ENCODE measurements at regions of chr13 and their contacts with region 1.

Region 1: DNA sequence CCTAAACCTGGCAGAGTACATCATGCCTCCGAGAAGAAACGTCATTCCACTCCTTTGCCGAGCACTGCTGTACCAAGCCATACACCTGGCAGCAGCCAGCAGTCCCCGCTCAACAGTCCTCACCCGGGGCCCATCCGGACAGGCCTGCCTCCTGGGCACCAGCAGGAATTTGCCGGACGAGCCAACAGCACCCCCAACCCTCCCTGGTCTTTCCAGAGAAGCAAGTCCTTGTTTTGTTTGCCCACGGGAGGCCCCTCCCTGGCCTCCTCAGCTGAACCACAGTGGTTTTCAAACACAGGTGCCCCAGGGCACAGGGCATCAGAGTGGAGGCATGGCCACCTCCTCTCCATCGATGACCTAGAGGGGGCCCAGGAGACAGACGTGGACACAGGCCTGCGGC is 58.3 kb downstream of the FAM124A start:
- DNase-seq: no peak
- ATAC-seq: peak in 4 of 8 donors; percentile 25 to 56 (median 40)
- H3K4me3 ChIP-seq: no peak overlapping the region
- H3K27ac ChIP-seq: no peak overlapping the region
- H3K4me1 ChIP-seq: peaks cover 2 to 46% (median 26%) of the 10 kb centered on the region in 9 donors
- H3K27me3 ChIP-seq: no peaks in the 10 kb centered on the region
- CTCF ChIP-seq: no peak

Region 2: GRCh38 chr13:51222037-51222685 is 58.3 kb before region 1 on chr13 and contains the start of gene FAM124A:
- intact Hi-C with region 1: loop called in 5 of 10 experiments (anchors 2 to 5 kb)
- DNase-seq: peak; percentile 36 to 66
- ATAC-seq: peak; percentile 53 to 94 (median 80)
- H3K4me3 ChIP-seq: peak within 1 kb of the TSS; percentile 68 to 98 (median 83)
- H3K27ac ChIP-seq: peak within 1 kb of the TSS; percentile 58 to 89 (median 78)
- H3K4me1 ChIP-seq: peaks cover 0 to 34% (median 18%) of the 10 kb centered on the region in 9 donors
- H3K27me3 ChIP-seq: peaks cover 0 to 33% (median 0%) of the 10 kb centered on the region in 7 donors
- CTCF ChIP-seq: peak in 6 of 9 donors; percentile 3 to 55 (median 32)
- total RNA-seq, gene FAM124A: 5.1 to 14.0 (median 8.4) TPM

Region 3: DNA sequence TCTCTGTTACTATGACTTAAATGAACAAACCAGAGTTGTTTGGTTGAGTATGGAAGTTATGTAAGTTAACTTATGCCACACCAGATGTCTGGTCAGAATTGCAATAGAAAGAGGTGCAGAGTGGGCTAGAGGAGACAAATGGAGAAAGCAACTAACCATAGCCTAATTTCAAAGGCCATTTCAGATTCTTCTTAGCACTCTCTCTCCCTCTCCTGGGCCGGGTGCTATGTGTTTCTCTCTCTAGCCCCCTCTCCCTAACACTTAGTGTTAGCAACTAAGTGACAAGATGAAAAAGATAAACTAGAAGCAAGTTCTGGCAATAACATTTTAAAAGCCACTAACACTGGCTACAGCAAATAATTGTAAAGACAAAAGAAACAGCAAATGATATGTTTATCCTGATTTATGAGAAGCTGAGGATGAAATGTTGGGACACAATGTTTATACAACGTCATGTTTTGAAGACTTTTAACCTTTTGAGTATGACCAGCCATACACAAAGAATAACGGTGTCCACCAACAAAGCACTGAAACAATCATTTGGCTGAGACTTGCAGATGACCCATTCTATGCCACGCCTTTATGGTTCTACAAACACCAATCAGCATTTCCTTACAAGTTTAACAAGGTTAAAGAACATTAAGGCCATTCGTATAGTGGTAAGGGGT is 77.6 kb after region 1 on chr13:
- intact Hi-C with region 1: loop called in 1 of 10 experiments (anchors 2 kb)
- DNase-seq: no peak
- ATAC-seq: no peak
- H3K4me3 ChIP-seq: no peak overlapping the region
- H3K27ac ChIP-seq: no peak overlapping the region
- H3K4me1 ChIP-seq: no peaks in the 10 kb centered on the region
- H3K27me3 ChIP-seq: no peaks in the 10 kb centered on the region
- CTCF ChIP-seq: no peak